CD8-positive, alpha-beta T cell (primary cell): ENCODE measurements at regions of chr6 and their contacts with region 1.

Region 1: DNA sequence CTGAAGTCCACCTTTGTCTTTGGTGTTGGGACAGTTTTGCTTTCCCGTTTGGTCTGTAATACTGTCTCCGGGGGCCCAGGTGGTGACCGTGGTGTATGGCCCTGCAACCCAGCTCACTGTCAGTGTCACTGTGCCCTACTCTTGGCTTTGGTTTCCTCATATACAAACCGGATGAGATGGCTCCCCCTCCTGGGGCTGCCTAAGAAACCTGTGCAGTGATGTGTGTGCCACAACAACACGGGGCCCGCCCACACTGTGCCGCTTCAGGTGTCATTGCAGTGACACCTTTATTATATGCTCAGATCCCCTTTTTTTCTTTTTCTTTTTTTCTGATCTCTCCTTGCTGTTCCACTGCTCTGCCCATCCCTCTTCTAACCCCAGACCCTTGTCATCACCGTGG is 73.9 kb downstream of the RAMACL start:
- DNase-seq: peak; percentile 12 to 72 (median 42)
- ATAC-seq: peak; percentile 94
- H3K4me3 ChIP-seq: no peak overlapping the region
- H3K4me3 Mint-ChIP-seq: no peak overlapping the region
- H3K27ac ChIP-seq: no peak overlapping the region
- H3K27ac Mint-ChIP-seq: peak overlapping the region; percentile 4
- H3K4me1 ChIP-seq: no peaks in the 10 kb centered on the region
- H3K4me1 Mint-ChIP-seq: peaks cover 8% of the 10 kb centered on the region
- H3K27me3 ChIP-seq: no peaks in the 10 kb centered on the region
- H3K27me3 Mint-ChIP-seq: no peaks in the 10 kb centered on the region
- CTCF ChIP-seq: no peak

Region 2: DNA sequence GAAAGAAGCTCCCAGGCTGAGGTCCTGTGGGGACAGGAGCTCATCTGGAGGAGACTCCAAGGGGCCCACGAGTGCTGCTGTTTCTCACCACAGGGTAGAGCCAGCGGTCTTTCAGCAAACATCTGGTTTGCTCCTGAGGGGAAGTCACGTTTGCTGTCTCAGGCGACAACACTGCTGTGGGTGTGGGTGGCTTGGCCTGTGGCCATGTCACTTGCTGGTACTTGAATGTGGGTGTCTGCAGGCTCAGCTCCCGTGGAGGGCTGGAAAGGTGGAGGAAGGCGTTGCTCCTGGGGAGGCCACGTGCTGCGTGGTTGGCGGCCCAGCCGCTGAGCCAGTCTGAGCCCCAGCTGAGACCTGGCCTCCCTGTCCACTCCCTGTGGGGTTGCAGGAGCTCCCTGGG is 77.0 kb before region 1 on chr6:
- CTCF ChIA-PET with region 1: interaction called, 13 read pairs
- POLR2A ChIA-PET with region 1: interaction called, 4 read pairs
- intact Hi-C with region 1: loop called (anchors 1 kb)
- DNase-seq: peak; percentile 26 to 84 (median 60)
- ATAC-seq: peak; percentile 88
- H3K4me3 ChIP-seq: no peak overlapping the region
- H3K4me3 Mint-ChIP-seq: peak overlapping the region; percentile 29
- H3K27ac ChIP-seq: no peak overlapping the region
- H3K27ac Mint-ChIP-seq: peak overlapping the region; percentile 88
- H3K4me1 ChIP-seq: peaks cover 22% of the 10 kb centered on the region
- H3K4me1 Mint-ChIP-seq: peaks cover 29% of the 10 kb centered on the region
- H3K27me3 ChIP-seq: no peaks in the 10 kb centered on the region
- H3K27me3 Mint-ChIP-seq: no peaks in the 10 kb centered on the region
- CTCF ChIP-seq: peak; percentile 35

Region 3: GRCh38 chr6:166456395-166457156 is 56.0 kb before region 1 on chr6:
- CTCF ChIA-PET with region 1: interaction called, 11 read pairs
- POLR2A ChIA-PET with region 1: no interaction called
- intact Hi-C with region 1: loop called in 1 of 2 experiments (anchors 5 kb)
- DNase-seq: peak in 4 of 9 experiments; percentile 22 to 44 (median 34)
- ATAC-seq: no peak
- H3K4me3 ChIP-seq: no peak overlapping the region
- H3K4me3 Mint-ChIP-seq: no peak overlapping the region
- H3K27ac ChIP-seq: no peak overlapping the region
- H3K27ac Mint-ChIP-seq: peak overlapping the region; percentile 39
- H3K4me1 ChIP-seq: no peaks in the 10 kb centered on the region
- H3K4me1 Mint-ChIP-seq: peaks cover 4% of the 10 kb centered on the region
- H3K27me3 ChIP-seq: no peaks in the 10 kb centered on the region
- H3K27me3 Mint-ChIP-seq: no peaks in the 10 kb centered on the region
- CTCF ChIP-seq: no peak